ENCODE measurements at regions of chr11 and their contacts with region 1.

Region 1: DNA sequence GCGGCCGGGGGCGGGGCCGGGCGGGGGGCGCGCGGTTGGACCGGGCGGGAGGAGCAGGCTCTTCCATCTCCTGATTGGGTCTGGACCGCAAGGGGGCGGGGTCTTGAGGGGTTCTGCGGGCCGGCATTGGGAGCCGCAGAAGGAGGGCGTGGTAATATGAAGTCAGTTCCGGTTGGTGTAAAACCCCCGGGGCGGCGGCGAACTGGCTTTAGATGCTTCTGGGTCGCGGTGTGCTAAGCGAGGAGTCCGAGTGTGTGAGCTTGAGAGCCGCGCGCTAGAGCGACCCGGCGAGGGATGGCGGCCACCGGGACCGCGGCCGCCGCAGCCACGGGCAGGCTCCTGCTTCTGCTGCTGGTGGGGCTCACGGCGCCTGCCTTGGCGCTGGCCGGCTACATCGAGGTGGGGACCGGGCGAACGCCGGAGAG is at the start of gene APLP2:
- DNase-seq: peak; percentile 99 to 100 (median 100)
- ATAC-seq: peak; percentile 94
- H3K4me3 ChIP-seq: peak within 1 kb of the TSS; percentile 34 to 59
- H3K27ac ChIP-seq: peak within 1 kb of the TSS; percentile 78 to 91 (median 88)
- H3K4me1 ChIP-seq: peaks cover 29% of the 10 kb centered on the region
- H3K27me3 ChIP-seq: no peaks in the 10 kb centered on the region
- CTCF ChIP-seq: no peak
- POLR2A ChIP-seq: peak; percentile 94 to 96 (median 95)
- total RNA-seq, gene APLP2: 157 to 177 TPM

Region 2: DNA sequence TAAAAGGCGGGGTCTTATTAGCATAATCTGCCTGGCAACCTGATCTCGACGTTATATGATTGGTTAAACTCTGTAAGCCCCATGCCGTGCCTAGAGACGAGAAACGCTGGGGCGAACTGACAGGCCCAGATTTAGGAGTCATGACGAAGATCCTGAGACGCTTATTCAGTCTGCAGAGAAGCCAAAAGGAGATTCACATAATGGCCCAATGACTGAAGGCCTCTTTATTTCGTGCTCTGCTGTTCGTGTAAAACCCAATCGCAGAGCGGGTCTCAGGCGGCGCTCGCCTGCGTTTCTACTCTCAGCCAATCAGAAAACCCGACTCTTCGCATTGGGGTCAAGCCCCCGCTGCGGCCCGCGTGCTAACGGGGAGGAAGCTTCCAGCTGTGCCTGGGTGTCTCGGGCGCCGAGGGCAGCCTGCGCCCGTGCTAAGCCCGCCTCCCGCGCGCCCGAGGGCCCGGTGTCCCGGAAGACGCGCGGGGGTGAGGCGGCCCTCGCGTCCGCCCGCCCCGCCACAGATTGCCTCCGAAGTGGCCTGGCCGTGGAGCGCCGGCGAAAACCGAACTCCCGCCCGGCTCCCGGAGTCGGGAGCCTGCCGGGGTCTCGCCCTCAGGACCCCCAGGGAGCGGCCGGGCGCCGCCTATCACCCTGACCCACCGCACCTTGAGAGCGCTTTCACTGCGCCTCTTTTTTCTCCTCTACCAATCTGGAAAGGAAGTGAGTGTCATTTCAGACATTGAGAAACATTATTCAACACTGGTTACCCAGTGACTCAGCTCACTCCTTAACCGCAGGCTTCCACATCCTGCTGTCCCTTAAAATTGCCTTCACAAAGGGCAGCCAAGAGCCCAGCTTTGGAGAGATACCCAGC is 66.6 kb before region 1 on chr11:
- intact Hi-C with region 1: loop called (anchors 10 kb)
- DNase-seq: peak; percentile 93 to 95 (median 94)
- ATAC-seq: peak; percentile 85
- H3K4me3 ChIP-seq: peak overlapping the region; percentile 20 to 89
- H3K27ac ChIP-seq: peak overlapping the region; percentile 99 to 100 (median 99)
- H3K4me1 ChIP-seq: peaks cover 26% of the 10 kb centered on the region
- H3K27me3 ChIP-seq: no peaks in the 10 kb centered on the region
- CTCF ChIP-seq: peak in 3 of 7 experiments; percentile 2 to 14 (median 7)
- POLR2A ChIP-seq: peak; percentile 80 to 83 (median 82)

Measured in body of pancreas (tissue), 4 donors.